Esophagus muscularis mucosa (tissue), 4 donors: ENCODE measurements at regions of chr7 and their contacts with region 1.

Region 1: DNA sequence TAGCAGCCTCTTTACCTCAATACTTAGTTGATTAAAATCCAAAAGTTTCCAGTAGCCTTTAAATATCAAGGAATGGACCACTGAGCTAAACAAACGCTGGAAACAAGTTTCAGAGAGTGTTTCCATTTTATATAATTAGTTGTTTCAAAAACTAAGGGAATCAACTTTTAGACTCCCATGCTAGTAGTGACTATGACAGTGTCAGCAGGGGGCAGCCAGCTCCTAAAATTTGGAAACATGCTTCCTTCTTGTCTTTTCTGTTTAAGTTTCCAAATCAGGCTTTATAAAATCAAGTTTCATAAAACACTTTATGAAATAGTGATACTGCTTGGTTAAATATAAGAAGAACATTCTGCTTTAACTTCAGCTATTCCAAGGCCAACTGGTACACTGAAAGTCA is 138.2 kb upstream of the TMEM229A start:
- DNase-seq: no peak
- H3K4me3 ChIP-seq: no peak overlapping the region
- H3K27ac ChIP-seq: no peak overlapping the region
- H3K4me1 ChIP-seq: no peaks in the 10 kb centered on the region
- H3K27me3 ChIP-seq: no peaks in the 10 kb centered on the region
- CTCF ChIP-seq: peak; percentile 42 to 44 (median 44)
- EP300 ChIP-seq: no peak
- POLR2A ChIP-seq: no peak

Region 2: DNA sequence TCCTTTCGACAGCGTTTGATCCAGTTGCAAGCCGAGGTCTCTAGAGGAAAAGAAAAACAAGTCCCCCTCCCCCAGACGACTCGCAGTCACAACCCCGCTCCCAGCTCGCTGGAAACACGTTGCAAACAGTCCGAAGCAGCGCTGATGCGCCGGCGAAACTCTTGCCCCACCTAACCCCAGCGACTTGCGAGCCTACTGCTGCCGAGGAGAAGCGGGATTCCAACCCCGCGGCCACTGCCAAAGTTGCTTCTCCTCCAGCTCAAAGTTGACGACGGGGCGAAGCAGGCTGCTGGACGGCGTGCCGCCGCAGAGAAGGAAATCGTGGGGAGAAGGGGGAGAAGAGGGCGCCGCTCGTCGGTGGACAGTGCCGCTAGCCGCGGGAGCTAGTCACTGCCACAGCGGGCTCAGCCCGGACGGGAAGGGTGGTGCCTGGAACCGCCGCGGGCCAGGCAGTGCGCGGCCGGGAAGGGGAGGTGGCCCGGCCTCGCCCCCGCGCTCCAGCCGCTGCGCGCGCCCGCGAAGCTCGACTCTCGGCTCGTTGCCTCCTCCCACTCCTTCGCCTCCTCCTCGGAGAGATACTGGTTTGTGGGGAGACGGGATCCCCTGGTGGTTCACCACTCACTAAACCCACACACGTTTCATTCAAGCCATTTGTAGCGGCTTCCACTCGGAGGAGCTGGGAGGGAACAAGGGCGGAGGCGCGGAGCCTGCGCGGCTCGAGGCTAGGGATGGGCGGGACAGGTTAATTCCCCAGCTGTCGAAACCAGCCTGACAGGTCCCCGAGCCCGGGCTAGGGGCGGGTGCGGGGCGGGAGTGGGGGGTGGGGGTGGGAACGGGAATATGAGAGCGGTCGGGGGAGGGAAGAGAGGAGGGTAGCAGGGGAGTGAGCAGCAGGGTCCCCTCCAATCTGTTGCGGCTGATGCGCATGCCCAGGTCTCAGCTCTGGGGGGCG is 594.6 kb after region 1 on chr7 and contains the start of gene GPR37:
- intact Hi-C with region 1: loop called (anchors 5 kb)
- DNase-seq: no peak
- H3K4me3 ChIP-seq: peak within 1 kb of the TSS; percentile 60 to 80 (median 67)
- H3K27ac ChIP-seq: peak within 1 kb of the TSS; percentile 74 to 82 (median 80)
- H3K4me1 ChIP-seq: peaks cover 18 to 49% (median 37%) of the 10 kb centered on the region in 4 donors
- H3K27me3 ChIP-seq: peaks cover 0 to 17% (median 0%) of the 10 kb centered on the region in 4 donors
- CTCF ChIP-seq: peak; percentile 21 to 53 (median 40)
- EP300 ChIP-seq: no peak
- POLR2A ChIP-seq: no peak
- total RNA-seq, gene GPR37: 5.0 to 15.2 (median 12.5) TPM